ENCODE measurements at regions of chr4 and their contacts with region 1.

Region 1: DNA sequence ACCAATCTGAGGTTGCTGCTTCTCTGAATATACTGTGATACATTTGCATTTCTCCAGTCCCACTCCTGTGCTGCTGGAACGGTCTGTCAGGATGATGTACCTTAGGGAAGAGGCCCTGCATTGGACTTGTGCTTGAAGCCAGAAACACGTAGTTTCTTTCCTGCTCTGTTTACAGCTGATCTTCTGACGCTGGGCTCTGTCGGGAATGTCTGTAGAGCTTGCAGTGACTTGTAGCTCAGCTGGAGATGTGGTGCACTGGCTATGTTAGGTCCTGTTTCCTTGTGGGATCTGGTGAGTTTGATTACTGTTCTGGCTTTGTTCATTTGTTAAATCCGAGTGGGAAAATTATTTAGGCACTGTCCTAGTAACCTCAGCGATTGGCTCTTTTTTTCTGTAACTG is 137.2 kb upstream of the WDR1 start:
- DNase-seq: no peak
- H3K4me3 Mint-ChIP-seq: no peak overlapping the region
- H3K27ac Mint-ChIP-seq: no peak overlapping the region
- H3K4me1 Mint-ChIP-seq: no peaks in the 10 kb centered on the region
- H3K27me3 Mint-ChIP-seq: peaks cover 3% of the 10 kb centered on the region

Region 2: GRCh38 chr4:10106421-10107039 is 147.2 kb before region 1 on chr4:
- intact Hi-C with region 1: no loop called
- DNase-seq: peak; percentile 37
- H3K4me3 Mint-ChIP-seq: peak overlapping the region; percentile 67
- H3K27ac Mint-ChIP-seq: peak overlapping the region; percentile 83
- H3K4me1 Mint-ChIP-seq: peaks cover 96% of the 10 kb centered on the region
- H3K27me3 Mint-ChIP-seq: no peaks in the 10 kb centered on the region

Region 3: DNA sequence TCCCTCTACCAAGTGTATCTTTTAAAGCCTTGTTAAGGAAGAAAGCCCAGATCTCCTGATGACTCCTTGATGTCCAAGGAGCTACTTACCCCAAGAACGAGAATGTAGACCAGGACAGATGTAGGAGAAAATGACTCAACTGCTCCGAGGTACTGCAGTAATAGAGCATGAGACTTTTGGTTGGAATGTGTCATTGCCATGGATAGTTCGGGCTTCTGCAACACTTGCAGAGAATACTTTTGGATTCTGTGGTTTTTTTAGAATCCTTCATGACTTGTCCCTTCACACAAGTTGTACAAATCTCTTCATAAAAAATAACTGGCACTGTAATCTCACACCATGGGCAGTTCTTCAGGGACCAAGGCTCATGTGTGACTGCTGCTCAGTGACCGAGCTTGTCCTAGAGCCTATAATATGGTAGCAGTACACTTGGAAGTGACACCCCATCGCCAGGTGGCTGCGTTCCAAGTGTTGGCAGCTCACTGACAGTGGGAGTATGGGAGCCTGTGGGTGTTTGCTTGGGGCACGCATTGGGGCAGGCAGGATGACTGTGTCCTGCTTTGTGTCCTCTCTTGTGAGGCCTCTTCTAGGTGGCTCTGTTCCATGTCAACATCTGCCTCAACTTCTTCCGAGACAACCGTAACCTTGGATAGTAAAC is 49.2 kb before region 1 on chr4:
- intact Hi-C with region 1: loop called (anchors 10 kb)
- DNase-seq: no peak
- H3K4me3 Mint-ChIP-seq: no peak overlapping the region
- H3K27ac Mint-ChIP-seq: no peak overlapping the region
- H3K4me1 Mint-ChIP-seq: no peaks in the 10 kb centered on the region
- H3K27me3 Mint-ChIP-seq: peaks cover 6% of the 10 kb centered on the region

Region 4: GRCh38 chr4:10237131-10237530 is 16.6 kb before region 1 on chr4:
- intact Hi-C with region 1: no loop called
- DNase-seq: no peak
- H3K4me3 Mint-ChIP-seq: no peak overlapping the region
- H3K27ac Mint-ChIP-seq: no peak overlapping the region
- H3K4me1 Mint-ChIP-seq: no peaks in the 10 kb centered on the region
- H3K27me3 Mint-ChIP-seq: peaks cover 2% of the 10 kb centered on the region

Region 5: DNA sequence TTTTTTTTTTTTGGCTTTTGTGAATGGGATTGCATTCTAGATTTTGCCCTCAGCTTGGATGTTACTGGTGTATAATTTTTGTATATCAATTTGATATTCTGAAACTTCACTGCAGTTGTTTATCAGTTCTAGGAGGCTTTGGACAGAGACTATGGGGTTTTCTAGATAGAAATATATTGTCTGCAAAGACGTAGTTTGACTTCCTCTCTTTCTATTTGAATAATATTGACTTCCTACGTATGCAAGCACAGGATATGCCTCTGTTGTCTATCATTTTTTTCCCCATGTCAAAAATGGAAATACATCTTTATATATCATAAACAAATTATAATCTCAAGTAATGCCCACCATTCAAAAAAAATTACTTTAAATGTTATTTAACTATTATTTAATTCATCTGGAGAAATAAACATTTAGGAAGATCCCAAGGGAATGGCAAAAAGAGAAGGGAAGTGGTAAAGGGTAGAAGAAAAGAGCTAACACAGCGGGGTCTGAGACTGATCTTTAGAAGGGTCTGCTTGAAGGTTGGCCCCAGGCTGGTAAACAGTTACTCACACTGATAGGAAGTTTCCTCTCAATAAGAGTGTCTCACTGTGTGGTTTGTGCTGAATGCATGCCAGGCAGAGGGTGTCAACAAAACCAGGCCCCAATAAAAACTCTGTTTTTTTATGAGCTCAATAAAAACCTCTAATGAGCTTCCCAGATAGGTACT is 167.7 kb after region 1 on chr4:
- intact Hi-C with region 1: no loop called
- DNase-seq: no peak
- H3K4me3 Mint-ChIP-seq: no peak overlapping the region
- H3K27ac Mint-ChIP-seq: peak overlapping the region; percentile 44
- H3K4me1 Mint-ChIP-seq: peaks cover 13% of the 10 kb centered on the region
- H3K27me3 Mint-ChIP-seq: peaks cover 2% of the 10 kb centered on the region

Region 6: DNA sequence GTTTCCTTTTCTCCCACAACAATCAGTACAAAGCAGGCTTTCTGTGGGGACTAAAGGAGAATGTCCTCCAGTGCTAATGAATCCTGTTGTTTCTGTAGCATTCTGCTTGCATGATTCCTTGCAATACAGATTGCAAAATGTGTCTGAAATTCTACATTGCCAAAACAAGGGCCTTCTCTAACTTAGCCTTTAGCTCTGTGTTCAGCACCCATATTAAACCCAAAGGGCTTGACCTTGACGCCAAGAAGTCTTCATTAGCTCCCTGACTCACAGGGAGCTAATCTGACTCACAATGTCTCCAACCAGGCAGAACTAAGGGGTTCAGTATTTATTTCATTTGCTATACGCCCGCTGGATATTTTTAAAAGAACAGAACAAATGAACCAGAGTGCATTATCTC is 672.2 kb after region 1 on chr4:
- intact Hi-C with region 1: no loop called
- DNase-seq: no peak
- H3K4me3 Mint-ChIP-seq: no peak overlapping the region
- H3K27ac Mint-ChIP-seq: no peak overlapping the region
- H3K4me1 Mint-ChIP-seq: no peaks in the 10 kb centered on the region
- H3K27me3 Mint-ChIP-seq: no peaks in the 10 kb centered on the region